Aorta (tissue), 5 donors: ENCODE measurements at regions of chr20 and their contacts with region 1.

Region 1: GRCh38 chr20:24149881-24150307 is 161.3 kb upstream of the GGTLC1 start:
- DNase-seq: no peak
- ATAC-seq: no peak
- H3K4me3 ChIP-seq: no peak overlapping the region
- H3K27ac ChIP-seq: no peak overlapping the region
- H3K4me1 ChIP-seq: no peaks in the 10 kb centered on the region
- H3K27me3 ChIP-seq: no peaks in the 10 kb centered on the region

Region 2: GRCh38 chr20:24169272-24169671 is 19.4 kb after region 1 on chr20:
- intact Hi-C with region 1: no loop called
- DNase-seq: no peak
- ATAC-seq: no peak
- H3K4me3 ChIP-seq: no peak overlapping the region
- H3K27ac ChIP-seq: no peak overlapping the region
- H3K4me1 ChIP-seq: no peaks in the 10 kb centered on the region
- H3K27me3 ChIP-seq: no peaks in the 10 kb centered on the region

Region 3: GRCh38 chr20:24781422-24781980 is 631.6 kb after region 1 on chr20:
- intact Hi-C with region 1: loop called in 1 of 2 experiments (anchors 10 kb)
- DNase-seq: peak in 1 of 2 donors; percentile 75
- ATAC-seq: no peak
- H3K4me3 ChIP-seq: no peak overlapping the region
- H3K27ac ChIP-seq: no peak overlapping the region
- H3K4me1 ChIP-seq: no peaks in the 10 kb centered on the region
- H3K27me3 ChIP-seq: no peaks in the 10 kb centered on the region